ENCODE measurements at regions of chr4 and their contacts with region 1.

Region 1: GRCh38 chr4:123102897-123103471 is 180.6 kb upstream of the NUDT6 start:
- DNase-seq: peak; percentile 19
- ATAC-seq: peak; percentile 79
- H3K4me3 ChIP-seq: no peak overlapping the region
- H3K27ac ChIP-seq: no peak overlapping the region
- H3K4me1 ChIP-seq: no peaks in the 10 kb centered on the region
- H3K27me3 ChIP-seq: no peaks in the 10 kb centered on the region
- CTCF ChIP-seq: peak; percentile 42 to 74 (median 53); a peak in 5 of 6 replicates
- POLR2A ChIP-seq: no peak
- RAD21 ChIP-seq: peak; percentile 73

Region 2: DNA sequence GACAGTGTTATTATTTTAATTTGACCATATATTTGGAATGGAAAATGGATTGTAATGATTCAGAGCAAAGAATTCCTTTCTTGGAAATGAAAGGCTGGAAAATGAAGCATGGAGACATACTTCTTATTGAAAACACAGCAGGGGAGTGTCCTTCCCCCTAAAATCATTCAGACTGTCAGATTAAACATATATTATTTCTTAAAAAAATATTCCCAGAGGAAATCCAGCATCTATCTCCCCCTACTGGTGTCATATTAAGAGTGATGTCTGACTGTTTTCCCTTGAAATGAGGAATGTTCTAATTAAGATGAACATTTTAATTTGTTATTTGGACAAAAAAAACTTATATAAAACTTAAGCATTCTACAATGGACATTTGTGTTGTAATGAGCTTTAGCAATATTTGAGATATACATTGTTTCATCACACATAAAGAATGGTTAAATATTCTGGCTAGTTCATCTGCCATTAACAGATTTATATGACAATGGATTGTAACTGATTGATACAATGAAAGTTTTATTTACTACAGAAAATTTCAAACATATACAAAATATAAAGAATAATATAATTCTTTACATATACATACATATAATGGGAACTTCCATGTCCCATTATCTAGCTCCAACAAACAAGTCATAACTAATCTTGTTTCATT is 558.2 kb after region 1 on chr4:
- CTCF ChIA-PET with region 1: no interaction called
- POLR2A ChIA-PET with region 1: no interaction called
- RAD21 ChIA-PET with region 1: no interaction called
- intact Hi-C with region 1: loop called (anchors 2 kb)
- DNase-seq: peak; percentile 21
- ATAC-seq: no peak
- H3K4me3 ChIP-seq: no peak overlapping the region
- H3K27ac ChIP-seq: no peak overlapping the region
- H3K4me1 ChIP-seq: no peaks in the 10 kb centered on the region
- H3K27me3 ChIP-seq: no peaks in the 10 kb centered on the region
- CTCF ChIP-seq: peak; percentile 54 to 73 (median 65); a peak in 5 of 6 replicates
- POLR2A ChIP-seq: no peak
- RAD21 ChIP-seq: peak; percentile 74

Region 3: DNA sequence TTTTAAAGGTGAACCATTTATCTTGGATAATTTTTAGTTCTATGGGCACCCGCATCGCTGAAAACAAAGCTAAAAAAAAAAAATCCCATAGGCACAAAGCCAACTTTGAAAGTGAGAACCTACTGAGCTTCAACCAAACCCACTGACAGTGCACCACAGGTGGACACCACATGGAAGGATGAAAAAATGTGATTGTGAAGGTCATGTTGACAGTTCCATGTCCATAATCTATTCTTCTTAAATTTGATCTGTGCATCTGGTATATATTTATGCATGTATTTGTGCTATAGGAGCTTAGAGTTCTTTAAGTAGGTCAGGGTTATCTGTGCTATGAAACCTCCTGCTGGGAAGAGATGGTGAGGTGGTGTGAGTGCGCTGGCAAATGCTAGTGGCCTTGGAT is 667.9 kb after region 1 on chr4:
- CTCF ChIA-PET with region 1: interaction called, 3 read pairs
- POLR2A ChIA-PET with region 1: no interaction called
- RAD21 ChIA-PET with region 1: no interaction called
- intact Hi-C with region 1: loop called (anchors 5 kb)
- DNase-seq: no peak
- ATAC-seq: no peak
- H3K4me3 ChIP-seq: no peak overlapping the region
- H3K27ac ChIP-seq: no peak overlapping the region
- H3K4me1 ChIP-seq: no peaks in the 10 kb centered on the region
- H3K27me3 ChIP-seq: no peaks in the 10 kb centered on the region
- CTCF ChIP-seq: no peak
- POLR2A ChIP-seq: no peak
- RAD21 ChIP-seq: no peak

Region 4: DNA sequence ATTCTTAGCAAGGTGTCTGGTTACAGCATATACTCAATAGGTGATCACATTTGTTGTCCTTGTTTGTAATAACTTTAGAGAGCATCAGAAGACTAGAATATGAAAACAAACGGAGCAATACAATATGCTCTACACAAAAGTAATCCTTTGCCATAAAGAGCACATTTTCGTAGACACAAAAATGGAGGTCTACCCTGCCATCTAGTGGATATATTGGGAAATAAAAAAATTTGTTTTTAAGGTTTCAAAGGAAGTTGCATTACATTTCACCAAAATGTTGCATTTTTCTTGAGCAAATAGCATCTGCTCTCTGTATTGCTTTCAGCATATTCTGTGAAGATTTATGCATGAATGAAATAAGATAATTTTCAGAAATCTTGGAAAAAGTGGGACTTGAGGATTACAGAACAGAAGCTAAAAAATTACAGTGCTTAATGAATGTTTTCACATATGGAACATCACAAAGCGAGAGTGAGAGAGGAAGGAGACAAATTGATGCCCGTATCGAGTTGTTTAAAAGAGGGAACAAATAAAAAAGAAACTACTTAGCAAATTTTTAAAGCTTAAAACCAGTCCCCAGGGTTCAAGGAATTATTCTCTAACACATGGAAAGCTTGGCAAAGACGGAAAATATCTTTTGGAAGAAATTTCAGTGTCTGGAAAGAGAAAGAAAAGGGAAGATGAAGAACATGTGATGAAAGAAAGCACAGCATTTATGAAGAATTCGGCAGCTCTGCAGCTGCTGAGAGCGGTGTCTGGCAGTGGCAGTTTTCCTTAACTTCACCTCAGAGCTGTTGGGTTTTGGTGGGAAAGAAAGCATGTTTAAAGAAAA is 1219.5 kb after region 1 on chr4:
- CTCF ChIA-PET with region 1: no interaction called
- POLR2A ChIA-PET with region 1: no interaction called
- RAD21 ChIA-PET with region 1: no interaction called
- intact Hi-C with region 1: loop called (anchors 5 kb)
- DNase-seq: peak; percentile 8
- ATAC-seq: peak; percentile 50; the same call in 1 of the 2 replicates
- H3K4me3 ChIP-seq: no peak overlapping the region
- H3K27ac ChIP-seq: no peak overlapping the region
- H3K4me1 ChIP-seq: no peaks in the 10 kb centered on the region
- H3K27me3 ChIP-seq: no peaks in the 10 kb centered on the region
- CTCF ChIP-seq: peak; percentile 34 to 66 (median 43); a peak in 5 of 6 replicates
- POLR2A ChIP-seq: no peak
- RAD21 ChIP-seq: peak; percentile 68

Measured in HCT116 (cell line).